CD14-positive monocyte (primary cell): ENCODE measurements at regions of chr12 and their contacts with region 1.

Region 1: DNA sequence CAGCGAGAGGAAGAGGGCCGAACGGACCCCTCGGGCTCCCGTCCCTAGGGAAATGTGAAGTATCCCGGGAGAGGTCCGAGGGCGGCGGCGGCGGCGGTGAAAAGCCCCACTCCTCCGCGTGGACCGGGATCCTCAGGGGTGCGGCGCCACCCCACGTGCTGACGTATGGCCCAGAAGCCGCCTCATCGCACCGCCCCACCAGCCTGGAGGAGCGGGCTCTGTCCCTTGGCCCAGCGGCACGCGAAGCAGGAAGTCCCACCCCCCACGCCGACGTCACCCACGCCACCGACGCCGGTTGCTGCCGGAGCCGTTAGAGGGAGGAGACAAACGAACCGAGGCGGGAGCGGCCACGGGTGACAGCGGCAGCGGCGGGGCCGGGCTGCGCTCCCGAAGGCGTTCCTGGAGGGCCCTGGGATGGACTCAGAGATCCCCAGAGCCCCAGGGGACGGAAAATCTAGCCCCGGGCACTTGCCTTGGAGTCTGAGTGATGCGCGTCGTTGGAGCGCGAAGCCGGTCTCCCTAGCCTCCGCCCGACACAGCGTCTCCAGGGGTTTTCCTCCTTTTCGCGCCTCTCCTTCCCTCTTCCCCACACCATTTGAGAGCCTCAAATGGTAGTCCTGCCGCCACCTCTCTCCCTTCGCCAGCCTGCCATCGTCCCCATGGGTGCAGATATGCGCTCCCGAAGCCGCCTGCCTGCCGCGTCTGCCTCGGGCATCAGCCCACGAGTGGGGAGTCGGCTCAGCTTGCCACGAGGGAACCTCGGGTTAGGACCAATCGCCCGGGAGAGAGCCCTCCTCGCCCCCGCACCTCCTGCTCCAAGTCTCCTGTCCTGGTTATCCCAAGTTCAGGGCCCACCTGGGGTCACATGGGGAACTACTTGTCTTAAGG is at the start of gene CEP83:
- DNase-seq: peak; percentile 93 to 94 (median 94)
- H3K4me3 ChIP-seq: peak within 1 kb of the TSS; percentile 50 to 88 (median 80)
- H3K4me3 Mint-ChIP-seq: peak within 1 kb of the TSS; percentile 98 to 99
- H3K27ac ChIP-seq: peak within 1 kb of the TSS; percentile 84 to 96
- H3K27ac Mint-ChIP-seq: peak within 1 kb of the TSS; percentile 91 to 95 (median 92)
- H3K4me1 ChIP-seq: peaks cover 11 to 22% of the 10 kb centered on the region in 2 donors
- H3K4me1 Mint-ChIP-seq: peaks cover 18% of the 10 kb centered on the region
- H3K27me3 ChIP-seq: peaks cover 0 to 3% of the 10 kb centered on the region in 2 donors
- H3K27me3 Mint-ChIP-seq: peaks cover 0 to 6% (median 2%) of the 10 kb centered on the region in 3 donors
- CTCF ChIP-seq: no peak
- polyA plus RNA-seq, gene CEP83: 0.73 to 3.1 (median 1.0) TPM

Region 2: GRCh38 chr12:94416613-94417012 is 43.4 kb before region 1 on chr12:
- intact Hi-C with region 1: no loop called
- DNase-seq: no peak
- H3K4me3 ChIP-seq: no peak overlapping the region
- H3K4me3 Mint-ChIP-seq: no peak overlapping the region
- H3K27ac ChIP-seq: no peak overlapping the region
- H3K27ac Mint-ChIP-seq: peak overlapping the region in 1 of 7 donors; percentile 40
- H3K4me1 ChIP-seq: no peaks in the 10 kb centered on the region
- H3K4me1 Mint-ChIP-seq: peaks cover 2% of the 10 kb centered on the region
- H3K27me3 ChIP-seq: no peaks in the 10 kb centered on the region
- H3K27me3 Mint-ChIP-seq: peaks cover 0 to 2% (median 0%) of the 10 kb centered on the region in 3 donors
- CTCF ChIP-seq: no peak

Region 3: DNA sequence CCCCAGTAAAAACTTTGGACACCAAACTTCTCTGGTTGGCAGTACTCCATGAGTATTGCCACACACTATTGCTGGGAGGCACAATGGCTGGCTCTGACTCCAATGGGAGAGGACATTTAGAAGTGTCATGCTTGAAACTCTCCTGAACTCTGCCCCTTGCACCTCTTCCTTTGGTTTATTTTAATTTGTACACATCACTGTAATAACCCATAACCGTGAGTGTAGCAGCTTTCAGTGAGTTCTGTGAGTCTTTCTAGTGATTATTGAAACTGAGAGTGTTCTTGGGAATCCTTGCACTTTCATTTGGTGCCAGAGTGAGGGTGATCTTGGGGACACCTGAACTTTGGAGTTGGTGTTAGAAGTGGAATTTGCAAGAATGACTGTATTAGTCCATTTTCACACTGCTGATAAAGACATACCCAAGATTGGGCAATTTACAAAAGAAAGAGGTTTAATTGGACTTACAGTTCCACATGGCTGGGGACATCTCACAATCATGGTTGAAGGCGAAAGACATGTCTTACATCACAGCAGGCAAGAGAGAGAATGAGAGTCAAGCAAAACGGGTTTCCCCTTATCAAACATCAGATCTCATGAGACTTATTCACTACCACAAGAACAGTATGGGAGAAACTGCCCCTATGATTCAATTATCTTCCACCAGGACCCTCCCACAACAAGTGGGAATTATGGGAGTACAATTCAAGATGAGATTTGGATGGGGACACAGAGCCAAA is 41.0 kb after region 1 on chr12:
- intact Hi-C with region 1: no loop called
- DNase-seq: no peak
- H3K4me3 ChIP-seq: no peak overlapping the region
- H3K4me3 Mint-ChIP-seq: no peak overlapping the region
- H3K27ac ChIP-seq: no peak overlapping the region
- H3K27ac Mint-ChIP-seq: no peak overlapping the region
- H3K4me1 ChIP-seq: no peaks in the 10 kb centered on the region
- H3K4me1 Mint-ChIP-seq: peaks cover 6% of the 10 kb centered on the region
- H3K27me3 ChIP-seq: no peaks in the 10 kb centered on the region
- H3K27me3 Mint-ChIP-seq: no peaks in the 10 kb centered on the region
- CTCF ChIP-seq: no peak

Region 4: DNA sequence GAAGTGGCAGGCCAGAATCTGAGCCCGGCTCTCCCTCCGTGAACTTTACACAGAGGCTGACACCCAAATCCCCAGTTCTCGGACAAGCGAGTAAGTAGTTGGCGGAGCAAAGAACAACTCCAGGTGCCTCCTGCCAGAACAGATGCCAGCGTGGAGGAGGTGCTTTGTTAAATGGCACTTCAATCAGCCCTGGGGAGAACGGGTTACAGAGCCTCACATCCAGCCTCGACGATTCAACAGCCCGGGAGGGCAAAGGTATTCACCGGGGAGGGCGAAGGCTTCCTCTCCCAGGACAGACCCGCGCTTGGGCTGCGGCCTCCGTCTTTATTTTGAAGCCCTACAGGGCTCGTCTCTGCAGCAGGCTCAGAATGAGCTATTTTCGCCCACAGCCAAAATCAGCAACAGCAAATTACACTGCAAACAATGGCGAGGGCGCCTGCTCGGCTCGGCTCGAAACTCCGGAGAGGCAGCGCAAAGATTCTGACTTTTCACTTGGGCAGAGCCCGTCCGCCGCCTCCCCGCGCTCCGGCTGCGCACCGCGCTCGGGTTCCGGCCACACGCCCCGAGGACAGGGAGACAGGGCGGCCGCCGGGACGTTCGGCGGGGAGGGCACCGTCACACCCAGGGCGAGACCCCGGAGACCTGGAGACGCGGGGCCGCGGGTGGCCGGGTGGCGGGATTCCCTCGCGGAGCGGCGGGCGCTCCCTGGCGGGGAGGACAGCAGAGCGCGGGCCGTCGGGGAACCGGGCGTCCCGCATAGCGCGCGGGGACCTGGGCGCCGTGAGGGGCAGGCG is 189.6 kb after region 1 on chr12:
- intact Hi-C with region 1: loop called in 1 of 2 experiments (anchors 10 kb)
- DNase-seq: peak in 2 of 3 donors; percentile 42 to 51
- H3K4me3 ChIP-seq: peak overlapping the region; percentile 36 to 86 (median 58)
- H3K4me3 Mint-ChIP-seq: peak overlapping the region; percentile 93 to 94
- H3K27ac ChIP-seq: peak overlapping the region in 1 of 2 donors; percentile 7
- H3K27ac Mint-ChIP-seq: peak overlapping the region in 6 of 7 donors; percentile 63 to 84 (median 78)
- H3K4me1 ChIP-seq: peaks cover 24 to 32% of the 10 kb centered on the region in 2 donors
- H3K4me1 Mint-ChIP-seq: peaks cover 37% of the 10 kb centered on the region
- H3K27me3 ChIP-seq: peaks cover 35 to 50% of the 10 kb centered on the region in 2 donors
- H3K27me3 Mint-ChIP-seq: peaks cover 53 to 67% (median 58%) of the 10 kb centered on the region in 3 donors
- CTCF ChIP-seq: peak; percentile 69